ENCODE measurements at regions of chr19 and their contacts with region 1.

Region 1: DNA sequence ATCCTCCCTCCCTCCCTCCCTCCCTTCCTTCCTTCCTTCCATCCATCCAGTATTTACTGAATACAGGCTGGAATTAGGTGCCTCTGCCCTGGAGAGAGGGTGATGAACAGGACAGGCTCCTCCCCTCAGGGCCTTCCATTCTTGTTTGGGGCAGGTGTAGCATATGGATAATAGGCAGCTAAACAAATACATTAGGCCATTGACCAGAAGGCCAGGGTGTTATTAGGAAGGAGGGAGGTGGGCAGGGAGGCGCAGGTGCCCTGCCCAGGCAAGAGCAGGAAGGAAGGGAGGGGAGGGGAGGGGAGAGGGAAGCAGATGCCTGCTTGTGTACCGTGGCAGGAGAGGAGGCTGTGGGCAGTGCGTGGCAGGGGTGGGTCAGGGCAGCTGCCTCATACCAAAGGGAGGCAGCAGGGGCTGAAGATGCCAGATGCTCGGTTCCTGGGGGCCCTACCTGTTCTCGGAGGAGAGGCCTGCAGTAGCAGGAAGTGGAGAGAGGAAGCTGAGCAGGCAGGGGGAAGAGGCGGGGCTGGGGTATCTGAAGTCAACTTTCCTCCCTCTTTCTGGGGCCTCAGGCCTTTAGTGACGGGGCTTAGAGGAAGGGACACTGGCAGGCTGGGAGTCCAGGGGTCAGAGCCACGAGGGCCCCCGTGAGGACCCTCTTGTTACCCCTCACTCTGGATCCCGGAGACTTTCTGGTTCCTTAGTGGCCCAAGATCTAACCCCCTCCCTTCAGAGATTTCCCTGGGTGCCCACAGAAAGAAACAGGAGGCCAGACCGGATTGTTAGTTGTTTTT is at the start of gene RINL:
- DNase-seq: peak; percentile 52 to 87 (median 67)
- ATAC-seq: peak; percentile 94 to 95
- H3K4me3 Mint-ChIP-seq: peak within 1 kb of the TSS; percentile 83 to 94 (median 88)
- H3K27ac Mint-ChIP-seq: peak within 1 kb of the TSS; percentile 97 to 99 (median 98)
- H3K4me1 Mint-ChIP-seq: peaks cover 21 to 53% (median 43%) of the 10 kb centered on the region in 4 donors
- H3K27me3 Mint-ChIP-seq: no peaks in the 10 kb centered on the region
- polyA plus RNA-seq, gene RINL: 29.9 to 64.7 (median 40.5) TPM

Region 2: DNA sequence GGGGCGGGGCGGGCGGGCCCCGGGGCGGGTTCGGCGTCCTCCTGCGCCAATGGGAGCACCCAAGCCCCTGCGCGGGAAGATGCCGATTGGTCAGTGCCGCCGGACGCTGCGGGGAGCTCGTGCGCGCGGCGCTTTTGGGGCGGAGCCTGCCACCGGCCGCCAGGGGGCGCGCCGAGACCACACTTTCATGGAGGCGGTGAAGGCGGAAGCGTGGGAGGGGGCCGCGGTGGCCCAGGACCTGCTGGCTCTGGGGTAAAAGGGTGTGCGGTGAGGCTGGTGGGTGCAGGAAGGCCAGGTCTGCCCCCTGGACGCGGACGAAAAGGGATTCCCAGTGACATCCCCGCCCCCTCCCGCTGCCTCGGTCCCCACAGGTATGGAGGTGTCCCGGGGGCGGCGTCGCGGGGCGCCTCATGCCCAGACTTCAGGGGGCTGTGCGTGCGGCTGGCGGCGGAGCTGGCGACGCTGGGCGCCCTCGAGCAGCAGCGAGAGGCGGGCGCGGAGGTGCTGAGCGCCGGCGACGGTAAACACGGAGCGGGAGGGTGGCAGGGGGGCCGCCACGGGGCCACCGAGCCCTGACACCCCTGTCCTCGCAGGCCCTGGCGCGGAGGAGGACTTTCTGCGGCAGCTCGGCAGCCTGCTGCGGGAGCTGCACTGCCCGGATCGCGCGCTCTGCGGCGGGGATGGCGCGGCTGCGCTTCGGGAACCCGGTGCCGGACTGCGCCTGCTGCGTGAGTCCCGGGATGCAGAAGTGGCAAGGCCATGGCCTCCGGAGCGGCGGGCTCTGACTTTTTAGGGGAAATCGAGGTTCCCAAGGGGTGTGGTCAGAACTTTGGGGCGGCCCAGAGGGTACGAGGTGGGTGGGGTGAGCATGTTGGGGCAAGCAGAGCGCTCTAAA is 474.8 kb before region 1 on chr19 and contains the start of gene FAM98C:
- POLR2A ChIA-PET with region 1: interaction called, 11 read pairs
- DNase-seq: peak; percentile 95 to 99 (median 98)
- ATAC-seq: peak; percentile 94 to 95
- H3K4me3 Mint-ChIP-seq: peak within 1 kb of the TSS; percentile 86 to 96 (median 93)
- H3K27ac Mint-ChIP-seq: peak within 1 kb of the TSS; percentile 82 to 98 (median 94)
- H3K4me1 Mint-ChIP-seq: peaks cover 9 to 23% (median 19%) of the 10 kb centered on the region in 4 donors
- H3K27me3 Mint-ChIP-seq: peaks cover 0 to 8% (median 0%) of the 10 kb centered on the region in 5 donors
- polyA plus RNA-seq, gene FAM98C: 12.6 to 15.5 (median 15.4) TPM

Region 3: DNA sequence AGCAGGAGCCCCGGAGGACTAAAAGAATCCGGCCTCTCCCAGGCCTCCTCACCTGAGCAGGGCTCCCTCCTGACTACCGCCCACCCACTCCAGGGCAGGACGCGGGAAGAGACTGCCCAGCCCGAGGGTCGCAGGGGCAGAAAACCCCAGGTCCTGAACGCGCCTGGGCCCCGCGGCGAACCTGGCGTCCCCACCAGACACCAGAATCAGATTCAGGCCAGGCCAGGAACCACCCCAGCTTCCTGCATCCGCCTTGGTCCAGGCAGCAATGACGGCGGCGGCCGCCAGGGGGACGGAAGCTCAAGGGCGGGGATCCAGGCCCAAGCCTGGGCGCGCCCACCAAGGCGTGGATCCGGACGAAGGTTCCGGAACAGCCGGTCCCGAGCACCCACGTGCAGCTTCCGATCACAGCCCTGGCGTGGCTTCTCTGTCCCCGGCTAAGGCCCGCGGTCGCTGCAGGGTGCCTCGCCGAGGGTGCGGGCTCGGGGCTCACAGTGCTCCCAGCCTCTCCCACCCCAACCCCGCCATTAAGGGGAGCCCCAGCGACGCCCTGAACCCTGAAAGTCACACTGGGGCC is 108.3 kb before region 1 on chr19:
- POLR2A ChIA-PET with region 1: interaction called, 10 read pairs
- DNase-seq: peak; percentile 75 to 96 (median 89)
- ATAC-seq: peak; percentile 84 to 85
- H3K4me3 Mint-ChIP-seq: peak overlapping the region; percentile 28 to 78 (median 58)
- H3K27ac Mint-ChIP-seq: peak overlapping the region; percentile 37 to 91 (median 84)
- H3K4me1 Mint-ChIP-seq: peaks cover 3 to 9% (median 7%) of the 10 kb centered on the region in 4 donors
- H3K27me3 Mint-ChIP-seq: no peaks in the 10 kb centered on the region

Region 4: GRCh38 chr19:38838573-38839269 is 39.3 kb before region 1 on chr19:
- POLR2A ChIA-PET with region 1: interaction called, 25 read pairs
- DNase-seq: no peak
- ATAC-seq: no peak
- H3K4me3 Mint-ChIP-seq: no peak overlapping the region
- H3K27ac Mint-ChIP-seq: peak overlapping the region in 8 of 10 donors; percentile 20 to 92 (median 54)
- H3K4me1 Mint-ChIP-seq: peaks cover 23 to 53% (median 50%) of the 10 kb centered on the region in 4 donors
- H3K27me3 Mint-ChIP-seq: peaks cover 0 to 5% (median 0%) of the 10 kb centered on the region in 5 donors

Region 5: DNA sequence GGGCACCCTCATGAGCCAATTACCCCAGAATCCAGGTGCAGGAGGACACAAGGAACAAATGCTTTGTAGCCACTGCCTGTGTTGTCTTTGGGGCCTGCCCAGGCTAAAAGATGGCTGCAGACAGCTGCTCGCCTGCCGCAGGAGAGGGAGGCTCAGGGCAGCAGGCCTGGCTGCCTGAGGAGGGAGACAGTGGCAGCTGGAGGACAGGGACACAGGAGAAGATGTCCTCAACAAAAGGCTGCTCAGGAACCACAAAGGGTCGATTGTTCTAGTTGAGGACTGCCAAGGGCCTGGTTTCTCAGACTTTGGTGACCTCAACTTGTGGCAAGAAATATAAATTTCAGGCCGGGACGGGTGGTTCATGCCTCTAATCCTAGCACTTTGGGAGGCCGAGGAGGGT is 13.8 kb after region 1 on chr19:
- POLR2A ChIA-PET with region 1: interaction called, 10 read pairs
- DNase-seq: no peak
- ATAC-seq: no peak
- H3K4me3 Mint-ChIP-seq: no peak overlapping the region
- H3K27ac Mint-ChIP-seq: no peak overlapping the region
- H3K4me1 Mint-ChIP-seq: peaks cover 4 to 16% (median 11%) of the 10 kb centered on the region in 4 donors
- H3K27me3 Mint-ChIP-seq: no peaks in the 10 kb centered on the region

Region 6: DNA sequence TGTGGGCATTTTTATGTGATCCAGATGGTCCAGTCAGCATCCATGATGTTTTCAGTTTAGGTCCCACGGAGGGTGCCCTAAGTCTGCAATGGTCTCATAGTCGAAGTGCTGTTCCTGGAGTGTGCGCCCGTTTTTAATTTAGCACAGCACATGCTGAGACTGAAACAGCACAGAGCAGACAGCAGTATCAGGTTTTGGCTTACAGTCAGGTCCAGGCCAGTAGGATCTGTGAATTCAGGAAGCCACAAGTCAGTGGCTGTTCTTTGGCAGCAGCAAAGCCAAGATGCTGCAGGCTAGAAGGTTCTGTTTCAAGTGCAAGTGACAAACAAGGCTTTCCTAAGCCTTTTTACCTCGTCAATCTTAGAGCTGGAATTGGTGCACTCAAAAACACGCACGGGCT is 136.1 kb after region 1 on chr19:
- POLR2A ChIA-PET with region 1: no interaction called
- DNase-seq: no peak
- ATAC-seq: no peak
- H3K4me3 Mint-ChIP-seq: no peak overlapping the region
- H3K27ac Mint-ChIP-seq: no peak overlapping the region
- H3K4me1 Mint-ChIP-seq: no peaks in the 10 kb centered on the region
- H3K27me3 Mint-ChIP-seq: peaks cover 0 to 21% (median 17%) of the 10 kb centered on the region in 5 donors

Measured in naive thymus-derived CD8-positive, alpha-beta T cell (primary cell).